ENCODE measurements at regions of chr6 and their contacts with region 1.

Region 1: GRCh38 chr6:52697903-52698302 is 27.0 kb downstream of the TMEM14A start:
- DNase-seq: peak; percentile 14
- ATAC-seq: peak; percentile 51; the same call in 1 of the 2 replicates
- H3K4me3 ChIP-seq: no peak overlapping the region
- H3K27ac ChIP-seq: no peak overlapping the region
- H3K4me1 ChIP-seq: no peaks in the 10 kb centered on the region
- H3K27me3 ChIP-seq: no peaks in the 10 kb centered on the region
- CTCF ChIP-seq: peak; percentile 40

Region 2: DNA sequence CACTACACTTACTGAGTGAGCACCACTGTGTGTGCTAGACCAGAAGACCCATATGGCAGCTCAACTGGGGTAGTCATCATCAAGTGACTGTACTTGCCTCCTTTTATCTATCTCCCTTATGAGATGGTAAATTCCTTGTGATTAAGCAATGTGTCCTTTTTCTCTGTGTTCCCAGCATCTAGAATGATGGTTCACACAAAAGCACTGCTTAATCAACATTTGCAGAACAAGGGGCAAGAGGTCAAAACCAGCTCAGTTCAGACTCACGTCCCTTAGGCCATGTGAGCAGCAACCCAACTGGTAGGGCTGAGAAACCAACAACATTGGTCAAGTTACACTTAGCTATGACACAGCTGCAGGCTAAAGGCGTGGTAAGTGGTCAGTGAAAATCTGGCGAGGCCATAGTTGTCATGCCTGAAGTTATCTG is 131.0 kb before region 1 on chr6:
- CTCF ChIA-PET with region 1: no interaction called
- POLR2A ChIA-PET with region 1: no interaction called
- intact Hi-C with region 1: no loop called
- DNase-seq: peak; percentile 96
- ATAC-seq: peak; percentile 94
- H3K4me3 ChIP-seq: no peak overlapping the region
- H3K27ac ChIP-seq: peak overlapping the region; percentile 70
- H3K4me1 ChIP-seq: peaks cover 33% of the 10 kb centered on the region
- H3K27me3 ChIP-seq: no peaks in the 10 kb centered on the region
- CTCF ChIP-seq: no peak

Region 3: GRCh38 chr6:52815167-52816092 is 117.5 kb after region 1 on chr6:
- CTCF ChIA-PET with region 1: no interaction called
- POLR2A ChIA-PET with region 1: no interaction called
- intact Hi-C with region 1: loop called (anchors 10 kb)
- DNase-seq: peak; percentile 74
- ATAC-seq: peak; percentile 92
- H3K4me3 ChIP-seq: no peak overlapping the region
- H3K27ac ChIP-seq: no peak overlapping the region
- H3K4me1 ChIP-seq: no peaks in the 10 kb centered on the region
- H3K27me3 ChIP-seq: no peaks in the 10 kb centered on the region
- CTCF ChIP-seq: peak; percentile 79

Region 4: DNA sequence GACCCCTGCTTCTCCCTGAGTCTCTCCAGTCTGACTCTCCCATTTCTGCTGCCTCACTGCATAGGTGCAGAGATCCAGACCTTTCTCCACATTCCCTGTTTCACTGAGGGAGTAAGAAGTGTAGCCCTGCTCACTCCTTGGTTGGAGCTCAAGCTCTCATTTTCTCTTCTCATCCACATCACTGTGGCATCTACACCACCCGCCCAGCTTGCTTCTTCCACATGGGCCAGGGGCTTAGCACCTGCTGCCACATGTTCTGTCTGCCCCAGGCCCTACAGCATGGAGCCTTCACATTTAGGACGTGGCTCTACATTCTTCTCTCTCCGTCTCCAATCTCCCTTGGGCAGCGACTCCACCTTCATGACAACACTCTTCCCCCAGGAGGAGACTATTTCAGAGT is 151.2 kb after region 1 on chr6:
- CTCF ChIA-PET with region 1: no interaction called
- POLR2A ChIA-PET with region 1: no interaction called
- intact Hi-C with region 1: no loop called
- DNase-seq: no peak
- ATAC-seq: no peak
- H3K4me3 ChIP-seq: no peak overlapping the region
- H3K27ac ChIP-seq: no peak overlapping the region
- H3K4me1 ChIP-seq: no peaks in the 10 kb centered on the region
- H3K27me3 ChIP-seq: no peaks in the 10 kb centered on the region
- CTCF ChIP-seq: no peak

Region 5: DNA sequence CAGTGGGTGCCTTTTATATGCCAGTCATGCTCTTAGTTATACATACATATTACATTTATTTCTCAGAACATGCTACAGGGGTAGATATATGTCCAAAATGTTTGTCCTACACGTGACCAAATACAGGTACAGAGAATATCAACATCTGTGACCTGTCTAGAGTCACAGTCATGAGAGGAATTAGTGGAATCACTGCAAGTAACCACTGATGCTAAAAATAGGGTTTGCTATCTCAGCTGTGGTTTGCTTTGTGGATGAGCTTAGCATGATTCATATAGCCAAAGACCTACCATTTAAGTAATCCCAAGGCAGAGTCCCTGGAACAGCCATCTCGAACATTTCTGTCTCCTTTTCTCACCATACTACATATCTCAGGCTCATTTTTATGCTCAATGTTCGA is 179.3 kb after region 1 on chr6:
- CTCF ChIA-PET with region 1: no interaction called
- POLR2A ChIA-PET with region 1: no interaction called
- intact Hi-C with region 1: loop called (anchors 10 kb)
- DNase-seq: peak; percentile 87
- ATAC-seq: peak; percentile 79
- H3K4me3 ChIP-seq: no peak overlapping the region
- H3K27ac ChIP-seq: no peak overlapping the region
- H3K4me1 ChIP-seq: peaks cover 21% of the 10 kb centered on the region
- H3K27me3 ChIP-seq: no peaks in the 10 kb centered on the region
- CTCF ChIP-seq: no peak